Ascending aorta (tissue), 2 donors: ENCODE measurements at regions of chr18 and their contacts with region 1.

Region 1: GRCh38 chr18:35459005-35459441 is 38.7 kb downstream of the INO80C start:
- DNase-seq: peak in 1 of 2 donors; percentile 82
- H3K4me3 ChIP-seq: no peak overlapping the region
- H3K27ac ChIP-seq: peak overlapping the region; percentile 29 to 33
- H3K4me1 ChIP-seq: peaks cover 9 to 32% of the 10 kb centered on the region in 2 donors
- H3K27me3 ChIP-seq: no peaks in the 10 kb centered on the region
- CTCF ChIP-seq: no peak

Region 2: DNA sequence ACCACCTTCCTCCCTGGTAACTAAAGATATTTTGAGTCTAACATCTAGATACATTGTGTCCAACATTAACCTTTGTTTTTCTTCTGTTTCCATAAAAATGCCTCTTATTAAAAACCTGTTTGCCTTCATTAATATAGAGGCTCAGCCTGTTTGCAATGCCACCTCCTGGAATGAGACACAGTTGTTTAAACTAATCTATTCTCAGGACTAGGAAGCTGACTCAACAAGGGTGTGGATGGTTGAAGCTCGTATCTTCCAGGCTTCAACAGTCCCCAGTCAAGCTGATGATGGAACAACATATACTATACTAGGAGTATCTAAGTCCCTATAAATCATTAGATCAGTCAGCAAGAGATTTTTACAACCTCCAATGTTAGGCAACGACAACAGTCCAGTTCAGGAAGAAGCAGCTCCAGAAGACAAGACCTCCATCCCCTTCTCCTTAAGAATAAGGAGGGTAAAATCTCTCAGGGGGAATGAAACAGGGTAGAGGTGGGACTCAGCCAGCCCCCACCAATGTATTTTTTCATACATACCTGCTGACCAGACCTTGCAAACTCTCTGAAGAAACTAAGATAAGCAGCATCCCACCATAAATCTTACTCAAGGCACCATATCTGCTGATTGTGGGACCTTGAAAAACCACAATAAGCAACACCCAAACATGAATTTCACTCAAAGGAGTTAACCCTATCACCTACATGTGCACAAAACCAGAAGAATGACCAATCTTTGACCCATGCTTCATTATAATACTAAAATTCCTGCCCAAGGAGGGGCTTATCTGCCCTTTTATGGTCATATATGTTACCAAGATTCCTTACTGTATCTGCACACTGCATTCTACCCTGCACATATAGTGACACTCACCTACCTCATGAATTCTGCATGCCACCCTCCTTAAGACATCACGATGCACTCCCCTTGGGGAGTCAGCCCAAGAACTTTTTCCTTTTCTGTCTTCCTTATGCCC is 136.3 kb before region 1 on chr18:
- intact Hi-C with region 1: no loop called
- DNase-seq: no peak
- H3K4me3 ChIP-seq: no peak overlapping the region
- H3K27ac ChIP-seq: no peak overlapping the region
- H3K4me1 ChIP-seq: no peaks in the 10 kb centered on the region
- H3K27me3 ChIP-seq: no peaks in the 10 kb centered on the region
- CTCF ChIP-seq: no peak

Region 3: GRCh38 chr18:35436076-35436649 is 22.9 kb before region 1 on chr18:
- intact Hi-C with region 1: loop called (anchors 2 kb)
- DNase-seq: no peak
- H3K4me3 ChIP-seq: no peak overlapping the region
- H3K27ac ChIP-seq: peak overlapping the region in 1 of 2 donors; percentile 59
- H3K4me1 ChIP-seq: no peaks in the 10 kb centered on the region
- H3K27me3 ChIP-seq: no peaks in the 10 kb centered on the region
- CTCF ChIP-seq: no peak